Activated CD8-positive, alpha-beta T cell treated with anti-CD3 and anti-CD28 coated beads, Interleukin-2, amount 10 ng/mL, durations not matched to agents 7 days and 5 days (primary cell): ENCODE measurements at regions of chr16 and their contacts with region 1.

Region 1: GRCh38 chr16:48365581-48366164 is 19.5 kb downstream of the SIAH1 start:
- DNase-seq: peak; percentile 86
- ATAC-seq: peak; percentile 98
- H3K4me3 Mint-ChIP-seq: peak overlapping the region; percentile 93
- H3K27ac Mint-ChIP-seq: peak overlapping the region; percentile 98
- H3K4me1 Mint-ChIP-seq: peaks cover 46% of the 10 kb centered on the region
- H3K27me3 Mint-ChIP-seq: no peaks in the 10 kb centered on the region

Region 2: GRCh38 chr16:48353565-48354163 is 12.0 kb before region 1 on chr16:
- CTCF ChIA-PET with region 1: interaction called, 49 read pairs
- POLR2A ChIA-PET with region 1: interaction called, 4 read pairs
- DNase-seq: peak; percentile 80
- ATAC-seq: peak; percentile 90
- H3K4me3 Mint-ChIP-seq: no peak overlapping the region
- H3K27ac Mint-ChIP-seq: peak overlapping the region; percentile 62
- H3K4me1 Mint-ChIP-seq: peaks cover 7% of the 10 kb centered on the region
- H3K27me3 Mint-ChIP-seq: no peaks in the 10 kb centered on the region

Region 3: DNA sequence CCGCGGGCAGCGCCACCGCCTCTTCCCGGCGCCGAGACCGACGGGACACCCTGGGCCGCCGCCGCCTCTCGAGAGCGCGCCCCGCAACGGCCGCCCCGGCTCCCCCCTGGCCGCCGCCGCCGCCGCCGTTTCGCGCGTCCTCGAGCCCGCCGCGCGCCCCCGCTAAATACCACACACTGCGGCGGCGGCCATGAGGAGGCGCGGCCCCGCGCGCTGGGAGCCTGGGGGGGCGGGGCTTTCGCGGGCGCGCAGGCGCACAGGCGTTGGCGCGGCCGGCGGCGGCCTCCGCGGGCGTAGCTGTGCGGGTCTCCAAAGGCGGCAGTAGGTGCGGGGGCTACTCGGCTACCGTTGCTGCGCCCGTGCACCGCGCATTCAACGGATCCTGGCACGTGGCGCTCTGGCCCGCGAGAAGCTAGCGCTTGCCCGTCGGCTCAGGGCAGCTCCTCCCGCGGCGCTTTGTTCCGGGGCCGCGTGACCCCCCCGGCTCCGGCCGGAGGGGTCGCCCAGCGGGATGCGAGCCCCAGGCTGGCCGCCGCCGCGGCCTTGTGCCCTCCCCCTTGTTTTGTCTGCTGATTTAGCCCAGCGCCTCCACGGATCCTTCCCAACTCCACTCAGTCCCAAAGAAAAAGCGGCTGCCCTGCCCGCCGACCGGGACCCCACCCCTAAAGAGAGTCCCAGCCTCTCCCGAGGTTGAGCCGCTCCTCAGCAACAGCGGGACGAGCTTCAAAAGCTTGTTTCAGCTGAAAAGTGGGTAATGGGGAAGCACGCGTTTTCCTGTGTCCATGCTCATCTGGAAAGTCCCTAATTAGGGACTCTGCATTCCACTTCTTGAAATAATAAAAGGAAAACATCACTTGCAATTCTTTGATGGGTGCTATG is 19.8 kb after region 1 on chr16 and contains the start of gene SIAH1:
- CTCF ChIA-PET with region 1: interaction called, 9 read pairs
- POLR2A ChIA-PET with region 1: interaction called, 19 read pairs
- DNase-seq: peak; percentile 87
- ATAC-seq: peak; percentile 85
- H3K4me3 Mint-ChIP-seq: peak within 1 kb of the TSS; percentile 88
- H3K27ac Mint-ChIP-seq: peak within 1 kb of the TSS; percentile 86
- H3K4me1 Mint-ChIP-seq: peaks cover 20% of the 10 kb centered on the region
- H3K27me3 Mint-ChIP-seq: no peaks in the 10 kb centered on the region
- total RNA-seq, gene SIAH1: 14.9 to 15.6 TPM

Region 4: GRCh38 chr16:48608871-48609651 is 243.4 kb after region 1 on chr16:
- CTCF ChIA-PET with region 1: interaction called, 8 read pairs
- POLR2A ChIA-PET with region 1: interaction called, 15 read pairs
- DNase-seq: peak; percentile 56
- ATAC-seq: peak; percentile 7
- H3K4me3 Mint-ChIP-seq: no peak overlapping the region
- H3K27ac Mint-ChIP-seq: peak overlapping the region; percentile 92
- H3K4me1 Mint-ChIP-seq: peaks cover 35% of the 10 kb centered on the region
- H3K27me3 Mint-ChIP-seq: no peaks in the 10 kb centered on the region